GM12878 (cell line): ENCODE measurements at regions of chr9 and their contacts with region 1.

Region 1: GRCh38 chr9:129954868-129955550 is 88.0 kb downstream of the FNBP1 start:
- DNase-seq: no peak
- ATAC-seq: no peak
- H3K4me3 ChIP-seq: no peak overlapping the region
- H3K27ac ChIP-seq: peak overlapping the region; percentile 39
- H3K4me1 ChIP-seq: peaks cover 42% of the 10 kb centered on the region
- H3K27me3 ChIP-seq: no peaks in the 10 kb centered on the region
- CTCF ChIP-seq: no peak
- EP300 ChIP-seq: no peak
- POLR2A ChIP-seq: no peak
- RAD21 ChIP-seq: no peak

Region 2: GRCh38 chr9:129796029-129796910 is 158.7 kb before region 1 on chr9:
- CTCF ChIA-PET with region 1: no interaction called
- POLR2A ChIA-PET with region 1: no interaction called
- RAD21 ChIA-PET with region 1: no interaction called
- SMC1A ChIA-PET with region 1: no interaction called
- in situ Hi-C with region 1: no loop called
- intact Hi-C with region 1: no loop called
- DNase-seq: no peak
- ATAC-seq: no peak
- H3K4me3 ChIP-seq: no peak overlapping the region
- H3K27ac ChIP-seq: no peak overlapping the region
- H3K4me1 ChIP-seq: no peaks in the 10 kb centered on the region
- H3K27me3 ChIP-seq: peaks cover 0 to 2% of the 10 kb centered on the region in 2 experiments; a peak in 1 of 4 replicates
- CTCF ChIP-seq: no peak
- EP300 ChIP-seq: no peak
- POLR2A ChIP-seq: no peak
- RAD21 ChIP-seq: no peak

Region 3: GRCh38 chr9:129938291-129938979 is 16.6 kb before region 1 on chr9:
- CTCF ChIA-PET with region 1: interaction called, 9 read pairs
- POLR2A ChIA-PET with region 1: interaction called, 41 read pairs
- RAD21 ChIA-PET with region 1: interaction called, 34 read pairs
- SMC1A ChIA-PET with region 1: interaction called, 46 read pairs
- in situ Hi-C with region 1: no loop called
- intact Hi-C with region 1: loop called (anchors 2 kb)
- DNase-seq: no peak
- ATAC-seq: no peak
- H3K4me3 ChIP-seq: no peak overlapping the region
- H3K27ac ChIP-seq: no peak overlapping the region; the same call in 1 of the 2 replicates
- H3K4me1 ChIP-seq: peaks cover 34% of the 10 kb centered on the region
- H3K27me3 ChIP-seq: no peaks in the 10 kb centered on the region
- CTCF ChIP-seq: no peak
- EP300 ChIP-seq: no peak
- POLR2A ChIP-seq: no peak
- RAD21 ChIP-seq: no peak

Region 4: GRCh38 chr9:129968690-129969501 is 13.9 kb after region 1 on chr9:
- CTCF ChIA-PET with region 1: interaction called, 3 read pairs
- POLR2A ChIA-PET with region 1: interaction called, 4 read pairs
- RAD21 ChIA-PET with region 1: interaction called, 4 read pairs
- SMC1A ChIA-PET with region 1: interaction called, 17 read pairs
- in situ Hi-C with region 1: no loop called
- intact Hi-C with region 1: no loop called
- DNase-seq: no peak
- ATAC-seq: no peak
- H3K4me3 ChIP-seq: no peak overlapping the region
- H3K27ac ChIP-seq: no peak overlapping the region; the same call in 1 of the 2 replicates
- H3K4me1 ChIP-seq: peaks cover 16% of the 10 kb centered on the region
- H3K27me3 ChIP-seq: no peaks in the 10 kb centered on the region
- CTCF ChIP-seq: no peak
- EP300 ChIP-seq: no peak
- POLR2A ChIP-seq: no peak
- RAD21 ChIP-seq: no peak

Region 5: GRCh38 chr9:129988607-129989361 is 33.8 kb after region 1 on chr9:
- CTCF ChIA-PET with region 1: interaction called, 3 read pairs
- POLR2A ChIA-PET with region 1: interaction called, 11 read pairs
- RAD21 ChIA-PET with region 1: interaction called, 33 read pairs
- SMC1A ChIA-PET with region 1: interaction called, 66 read pairs
- in situ Hi-C with region 1: no loop called
- intact Hi-C with region 1: loop called (anchors 1 kb)
- DNase-seq: peak; percentile 99
- ATAC-seq: peak; percentile 65
- H3K4me3 ChIP-seq: peak overlapping the region; percentile 33
- H3K27ac ChIP-seq: peak overlapping the region; percentile 100
- H3K4me1 ChIP-seq: peaks cover 62% of the 10 kb centered on the region
- H3K27me3 ChIP-seq: no peaks in the 10 kb centered on the region
- CTCF ChIP-seq: no peak
- EP300 ChIP-seq: peak; percentile 74 to 96; a peak in 3 of 4 replicates
- POLR2A ChIP-seq: peak; percentile 70
- RAD21 ChIP-seq: peak; percentile 8; the same call in 1 of the 2 replicates

Region 6: GRCh38 chr9:129995409-129996160 is 40.6 kb after region 1 on chr9:
- CTCF ChIA-PET with region 1: interaction called, 3 read pairs
- POLR2A ChIA-PET with region 1: interaction called, 11 read pairs
- RAD21 ChIA-PET with region 1: interaction called, 33 read pairs
- SMC1A ChIA-PET with region 1: interaction called, 66 read pairs
- in situ Hi-C with region 1: no loop called
- intact Hi-C with region 1: no loop called
- DNase-seq: no peak
- ATAC-seq: peak; percentile 44
- H3K4me3 ChIP-seq: peak overlapping the region; percentile 37; the same call in 1 of the 2 replicates
- H3K27ac ChIP-seq: peak overlapping the region; percentile 100
- H3K4me1 ChIP-seq: peaks cover 77% of the 10 kb centered on the region
- H3K27me3 ChIP-seq: no peaks in the 10 kb centered on the region
- CTCF ChIP-seq: no peak
- EP300 ChIP-seq: no peak
- POLR2A ChIP-seq: peak; percentile 52
- RAD21 ChIP-seq: no peak

Region 7: GRCh38 chr9:130029223-130029973 is 74.4 kb after region 1 on chr9:
- CTCF ChIA-PET with region 1: no interaction called
- POLR2A ChIA-PET with region 1: interaction called, 3 read pairs
- RAD21 ChIA-PET with region 1: interaction called, 21 read pairs
- SMC1A ChIA-PET with region 1: interaction called, 21 read pairs
- in situ Hi-C with region 1: no loop called
- intact Hi-C with region 1: no loop called
- DNase-seq: no peak
- ATAC-seq: peak; percentile 12
- H3K4me3 ChIP-seq: peak overlapping the region; percentile 46
- H3K27ac ChIP-seq: peak overlapping the region; percentile 83
- H3K4me1 ChIP-seq: peaks cover 85% of the 10 kb centered on the region
- H3K27me3 ChIP-seq: no peaks in the 10 kb centered on the region
- CTCF ChIP-seq: no peak
- EP300 ChIP-seq: peak; percentile 42 to 45; a peak in 2 of 4 replicates
- POLR2A ChIP-seq: no peak
- RAD21 ChIP-seq: no peak

Region 8: DNA sequence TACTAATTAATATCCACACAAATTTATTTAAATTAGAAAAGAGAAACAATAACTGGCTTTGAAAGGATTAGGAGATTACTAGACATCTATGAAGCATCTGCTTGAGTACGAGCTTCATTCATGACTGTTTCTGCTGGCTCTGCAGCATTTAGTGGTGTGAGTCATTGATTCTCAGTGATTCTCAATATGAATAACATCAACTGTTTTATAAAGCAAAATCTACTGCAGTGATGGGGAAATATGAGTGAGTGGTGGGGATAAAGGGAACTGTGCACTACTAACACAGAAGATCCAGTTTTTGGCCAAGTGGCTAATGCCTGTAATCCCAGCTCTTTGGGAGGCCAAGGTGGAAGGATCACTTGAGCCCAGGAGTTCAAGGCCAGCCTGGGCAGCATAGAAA is 79.6 kb after region 1 on chr9:
- CTCF ChIA-PET with region 1: interaction called, 5 read pairs
- POLR2A ChIA-PET with region 1: interaction called, 6 read pairs
- RAD21 ChIA-PET with region 1: interaction called, 21 read pairs
- SMC1A ChIA-PET with region 1: interaction called, 21 read pairs
- in situ Hi-C with region 1: no loop called
- intact Hi-C with region 1: no loop called
- DNase-seq: no peak
- ATAC-seq: peak; percentile 3
- H3K4me3 ChIP-seq: peak overlapping the region; percentile 61
- H3K27ac ChIP-seq: peak overlapping the region; percentile 83
- H3K4me1 ChIP-seq: peaks cover 52% of the 10 kb centered on the region
- H3K27me3 ChIP-seq: no peaks in the 10 kb centered on the region
- CTCF ChIP-seq: no peak
- EP300 ChIP-seq: no peak
- POLR2A ChIP-seq: no peak
- RAD21 ChIP-seq: no peak

Region 9: GRCh38 chr9:130712564-130713285 is 757.7 kb after region 1 on chr9:
- CTCF ChIA-PET with region 1: no interaction called
- POLR2A ChIA-PET with region 1: no interaction called
- RAD21 ChIA-PET with region 1: no interaction called
- SMC1A ChIA-PET with region 1: no interaction called
- in situ Hi-C with region 1: no loop called
- intact Hi-C with region 1: no loop called
- DNase-seq: peak; percentile 91
- ATAC-seq: peak; percentile 99
- H3K4me3 ChIP-seq: peak overlapping the region; percentile 98
- H3K27ac ChIP-seq: peak overlapping the region; percentile 96
- H3K4me1 ChIP-seq: no peaks in the 10 kb centered on the region
- H3K27me3 ChIP-seq: no peaks in the 10 kb centered on the region
- CTCF ChIP-seq: no peak
- EP300 ChIP-seq: no peak
- POLR2A ChIP-seq: peak; percentile 90
- RAD21 ChIP-seq: no peak